Sigmoid colon (tissue), 7 donors: ENCODE measurements at regions of chr1 and their contacts with region 1.

Region 1: GRCh38 chr1:161098210-161099068 is at the start of gene KLHDC9:
- DNase-seq: peak; percentile 90
- H3K4me3 ChIP-seq: peak within 1 kb of the TSS; percentile 61 to 81 (median 76)
- H3K27ac ChIP-seq: peak within 1 kb of the TSS; percentile 73 to 79 (median 78)
- H3K4me1 ChIP-seq: peaks cover 0 to 19% (median 15%) of the 10 kb centered on the region in 4 donors
- H3K27me3 ChIP-seq: no peaks in the 10 kb centered on the region
- CTCF ChIP-seq: no peak
- EP300 ChIP-seq: no peak
- POLR2A ChIP-seq: no peak
- total RNA-seq, gene KLHDC9: 5.8 to 14.1 (median 10.8) TPM

Region 2: DNA sequence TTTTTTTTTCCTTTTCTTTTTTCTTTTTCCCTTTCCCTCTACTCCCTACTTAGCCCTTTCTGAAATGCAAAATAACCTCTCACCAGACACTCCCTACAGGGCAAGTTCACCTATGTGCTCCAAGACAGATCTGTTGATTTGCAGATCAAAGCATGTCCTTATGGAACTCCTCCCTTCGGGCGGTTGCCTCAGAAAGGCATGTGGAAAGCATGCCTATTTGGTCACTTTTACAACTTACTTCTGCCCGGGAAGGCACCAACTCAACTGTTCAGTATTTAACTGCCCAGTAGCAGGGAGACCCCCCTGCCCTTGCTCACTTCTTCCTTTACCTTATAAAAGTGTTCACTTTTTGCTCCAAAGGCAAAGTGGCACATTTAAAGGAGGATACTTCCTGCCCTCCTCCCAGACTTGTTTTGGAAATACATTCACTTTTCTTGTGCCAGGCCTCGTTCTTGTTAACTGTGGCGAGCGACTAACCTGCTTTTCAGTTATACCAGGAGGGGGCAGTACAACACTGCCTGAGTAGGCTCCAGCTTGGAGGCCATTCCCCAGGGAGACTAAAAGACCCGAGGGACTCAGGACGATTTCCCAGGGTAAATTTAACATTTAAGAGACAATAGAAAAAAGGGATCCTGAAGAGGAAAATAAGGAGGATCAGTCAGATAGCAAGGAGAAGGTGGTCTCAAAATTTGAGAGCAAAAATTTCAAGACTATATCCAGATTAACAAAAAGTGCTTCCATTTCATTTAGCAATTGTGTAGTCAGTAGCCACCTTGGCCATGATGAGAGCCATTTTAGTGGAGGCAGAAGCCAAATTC is 371.7 kb before region 1 on chr1:
- intact Hi-C with region 1: loop called (anchors 5 kb)
- DNase-seq: no peak
- H3K4me3 ChIP-seq: no peak overlapping the region
- H3K27ac ChIP-seq: no peak overlapping the region
- H3K4me1 ChIP-seq: peaks cover 0 to 6% (median 2%) of the 10 kb centered on the region in 4 donors
- H3K27me3 ChIP-seq: no peaks in the 10 kb centered on the region
- CTCF ChIP-seq: peak; percentile 13 to 73 (median 58)
- EP300 ChIP-seq: no peak
- POLR2A ChIP-seq: no peak

Region 3: DNA sequence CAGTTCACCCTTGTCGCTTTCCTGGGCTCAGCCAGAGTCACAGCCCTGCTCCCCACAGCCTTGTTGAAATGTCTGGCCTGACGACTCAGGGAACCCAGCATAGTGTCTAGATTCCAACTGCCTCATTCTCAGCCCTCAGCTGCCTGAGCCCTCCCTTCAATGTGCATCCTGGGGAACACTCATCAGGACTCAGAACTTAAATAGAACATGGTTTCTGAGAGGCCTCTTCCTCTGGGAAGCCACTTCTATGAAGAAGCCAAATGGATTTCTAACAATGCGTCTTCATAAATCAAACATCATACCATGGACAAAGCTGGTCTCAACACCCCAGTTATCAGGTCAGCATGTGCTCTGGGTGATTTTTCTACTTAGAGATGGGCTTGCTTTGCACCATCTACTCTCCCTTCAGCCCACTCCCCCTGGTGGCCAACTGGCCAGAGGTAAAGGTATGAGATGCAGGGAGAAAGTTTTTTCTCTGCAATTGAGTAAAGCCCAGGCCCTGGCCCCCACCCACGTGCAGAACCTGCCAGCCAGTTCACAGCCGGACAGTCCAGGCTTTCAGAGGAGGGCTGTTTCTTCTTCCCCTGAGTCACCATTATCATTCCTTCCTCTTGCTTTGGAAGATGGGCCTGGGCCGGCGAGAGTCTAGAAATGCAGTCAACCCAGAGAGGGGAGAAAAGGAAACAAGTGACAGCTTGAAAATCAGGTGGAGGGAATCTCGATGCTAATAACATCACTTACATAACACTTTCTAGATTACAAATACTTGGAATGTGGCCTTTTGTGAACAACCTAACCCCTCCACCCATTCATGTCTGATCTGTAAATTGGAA is 267.9 kb before region 1 on chr1:
- intact Hi-C with region 1: loop called (anchors 10 kb)
- DNase-seq: no peak
- H3K4me3 ChIP-seq: no peak overlapping the region
- H3K27ac ChIP-seq: no peak overlapping the region
- H3K4me1 ChIP-seq: no peaks in the 10 kb centered on the region
- H3K27me3 ChIP-seq: no peaks in the 10 kb centered on the region
- CTCF ChIP-seq: peak in 1 of 4 experiments; percentile 44
- EP300 ChIP-seq: no peak
- POLR2A ChIP-seq: no peak

Region 4: GRCh38 chr1:160997323-160998038 is 101.0 kb before region 1 on chr1:
- intact Hi-C with region 1: loop called (anchors 5 kb)
- DNase-seq: no peak
- H3K4me3 ChIP-seq: no peak overlapping the region
- H3K27ac ChIP-seq: peak overlapping the region in 1 of 4 donors; percentile 46
- H3K4me1 ChIP-seq: no peaks in the 10 kb centered on the region
- H3K27me3 ChIP-seq: no peaks in the 10 kb centered on the region
- CTCF ChIP-seq: peak in 2 of 4 experiments; percentile 18 to 32
- EP300 ChIP-seq: no peak
- POLR2A ChIP-seq: no peak

Region 5: GRCh38 chr1:161045750-161046571 is 52.5 kb before region 1 on chr1 and contains the start of gene USF1:
- intact Hi-C with region 1: loop called (anchors 2 kb)
- DNase-seq: peak; percentile 96
- H3K4me3 ChIP-seq: peak within 1 kb of the TSS; percentile 74 to 88 (median 81)
- H3K27ac ChIP-seq: peak within 1 kb of the TSS; percentile 90 to 96 (median 94)
- H3K4me1 ChIP-seq: peaks cover 0 to 20% (median 15%) of the 10 kb centered on the region in 4 donors
- H3K27me3 ChIP-seq: no peaks in the 10 kb centered on the region
- CTCF ChIP-seq: no peak
- EP300 ChIP-seq: no peak
- POLR2A ChIP-seq: peak; percentile 48 to 61
- total RNA-seq, gene USF1: 54.8 to 76.2 (median 62.5) TPM